ENCODE measurements at regions of chr7 and their contacts with region 1.

Region 1: DNA sequence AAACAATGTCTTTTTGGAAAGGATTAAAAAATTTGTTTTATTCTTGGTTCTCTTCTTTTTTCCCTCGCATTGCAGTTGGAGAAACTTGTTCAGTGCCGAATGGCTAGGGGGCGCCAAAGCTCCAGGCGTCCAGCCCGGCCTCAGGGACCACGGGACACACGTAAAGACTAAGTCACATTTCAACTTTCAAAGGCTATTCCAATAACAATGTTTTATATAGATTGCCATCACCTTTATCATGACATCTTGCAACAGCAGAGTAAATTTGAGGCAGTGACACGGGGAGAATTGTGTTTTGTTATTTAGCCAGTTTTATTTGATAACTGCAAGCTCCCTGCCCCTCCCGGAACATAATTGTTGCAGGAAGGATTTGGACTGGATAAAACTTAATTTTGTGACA is 2.2 kb upstream of the IGFBP3 start:
- DNase-seq: peak; percentile 75 to 79
- ATAC-seq: peak in 7 of 8 donors; percentile 47 to 74 (median 66)
- H3K4me3 ChIP-seq: peak overlapping the region in 9 of 10 donors; percentile 34 to 77 (median 63)
- H3K27ac ChIP-seq: peak overlapping the region in 5 of 10 donors; percentile 7 to 73 (median 70)
- H3K4me1 ChIP-seq: peaks cover 5 to 53% (median 45%) of the 10 kb centered on the region in 9 donors
- H3K27me3 ChIP-seq: peaks cover 0 to 57% (median 0%) of the 10 kb centered on the region in 7 donors
- CTCF ChIP-seq: peak; percentile 88 to 98 (median 93)

Region 2: GRCh38 chr7:46215987-46216567 is 292.8 kb after region 1 on chr7:
- intact Hi-C with region 1: loop called in 1 of 10 experiments (anchors 10 kb)
- DNase-seq: peak; percentile 27 to 68
- ATAC-seq: peak; percentile 76 to 91 (median 84)
- H3K4me3 ChIP-seq: no peak overlapping the region
- H3K27ac ChIP-seq: peak overlapping the region in 6 of 10 donors; percentile 54 to 84 (median 66)
- H3K4me1 ChIP-seq: peaks cover 2 to 42% (median 13%) of the 10 kb centered on the region in 9 donors
- H3K27me3 ChIP-seq: no peaks in the 10 kb centered on the region
- CTCF ChIP-seq: no peak

Region 3: DNA sequence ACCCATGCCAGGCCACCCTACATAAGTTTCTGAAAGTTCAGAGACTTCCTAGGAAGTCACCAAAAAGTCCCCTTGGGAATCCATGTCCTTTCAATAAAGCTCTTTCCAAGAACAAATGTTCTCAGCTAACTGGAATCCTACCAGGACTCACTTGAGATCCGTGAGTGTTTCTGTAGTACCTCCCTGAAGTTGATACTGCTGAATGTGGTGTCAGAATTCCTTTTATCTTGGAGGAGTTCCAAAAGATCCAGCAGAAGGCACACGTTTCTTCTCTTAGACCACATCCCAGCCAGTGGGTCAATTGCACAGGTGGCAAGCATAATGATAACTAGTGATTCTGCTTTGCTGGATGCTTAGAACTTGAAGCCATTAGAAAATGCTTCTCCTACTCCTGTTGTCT is 687.5 kb after region 1 on chr7:
- intact Hi-C with region 1: loop called in 1 of 10 experiments (anchors 5 kb)
- DNase-seq: no peak
- ATAC-seq: peak in 5 of 8 donors; percentile 17 to 75 (median 47)
- H3K4me3 ChIP-seq: no peak overlapping the region
- H3K27ac ChIP-seq: no peak overlapping the region
- H3K4me1 ChIP-seq: peaks cover 3 to 33% (median 10%) of the 10 kb centered on the region in 9 donors
- H3K27me3 ChIP-seq: no peaks in the 10 kb centered on the region
- CTCF ChIP-seq: no peak

Region 4: GRCh38 chr7:46776790-46777189 is 853.5 kb after region 1 on chr7:
- intact Hi-C with region 1: loop called in 1 of 10 experiments (anchors 10 kb)
- DNase-seq: no peak
- ATAC-seq: no peak
- H3K4me3 ChIP-seq: no peak overlapping the region
- H3K27ac ChIP-seq: no peak overlapping the region
- H3K4me1 ChIP-seq: peaks cover 0 to 35% (median 18%) of the 10 kb centered on the region in 9 donors
- H3K27me3 ChIP-seq: no peaks in the 10 kb centered on the region
- CTCF ChIP-seq: peak; percentile 8 to 68 (median 47)

Region 5: DNA sequence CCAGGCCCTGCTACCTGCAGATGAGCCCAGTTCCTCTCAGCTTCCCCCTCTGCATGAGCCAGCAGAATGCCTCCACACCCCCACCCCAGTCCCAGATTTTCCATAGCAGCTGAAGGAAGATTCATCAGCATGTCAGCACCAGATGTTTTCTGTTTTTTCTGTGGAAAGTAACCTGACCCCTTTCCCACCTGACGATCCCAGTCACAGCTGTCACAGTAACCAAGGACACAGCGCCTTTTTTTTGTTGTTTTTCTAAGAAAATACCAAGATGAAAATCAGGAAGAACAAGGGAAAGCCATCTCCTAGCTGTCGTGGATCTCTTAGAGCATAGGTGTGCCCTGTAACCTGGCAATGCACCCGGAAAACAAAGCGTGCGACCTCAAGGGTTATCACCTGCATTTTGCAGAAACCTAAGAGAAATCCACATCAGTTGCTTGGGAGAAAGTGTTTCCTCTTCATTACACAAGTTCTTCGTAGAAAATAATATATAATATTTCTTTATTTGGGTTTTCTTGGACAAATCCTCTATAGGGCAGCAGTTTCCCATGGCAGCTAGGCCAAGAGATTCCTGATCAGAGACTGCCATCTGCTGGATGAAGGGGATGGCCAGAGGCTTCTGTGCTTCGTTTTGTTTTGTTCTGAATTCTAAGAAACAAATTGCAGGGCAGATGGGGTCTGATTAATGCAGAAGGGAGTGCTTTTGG is 1256.7 kb after region 1 on chr7:
- intact Hi-C with region 1: loop called in 8 of 10 experiments (anchors 1 to 10 kb)
- DNase-seq: peak in 1 of 2 donors; percentile 56
- ATAC-seq: peak; percentile 44 to 74 (median 61)
- H3K4me3 ChIP-seq: no peak overlapping the region
- H3K27ac ChIP-seq: no peak overlapping the region
- H3K4me1 ChIP-seq: peaks cover 7 to 51% (median 29%) of the 10 kb centered on the region in 9 donors
- H3K27me3 ChIP-seq: no peaks in the 10 kb centered on the region
- CTCF ChIP-seq: peak; percentile 55 to 91 (median 82)

Region 6: GRCh38 chr7:47254081-47255006 is 1331.1 kb after region 1 on chr7:
- intact Hi-C with region 1: loop called in 7 of 10 experiments (anchors 2 to 10 kb)
- DNase-seq: peak; percentile 73 to 88
- ATAC-seq: peak; percentile 91 to 96 (median 92)
- H3K4me3 ChIP-seq: peak overlapping the region; percentile 32 to 80 (median 67)
- H3K27ac ChIP-seq: peak overlapping the region; percentile 81 to 96 (median 89)
- H3K4me1 ChIP-seq: peaks cover 2 to 17% (median 15%) of the 10 kb centered on the region in 9 donors
- H3K27me3 ChIP-seq: no peaks in the 10 kb centered on the region
- CTCF ChIP-seq: peak; percentile 88 to 100 (median 95)

Measured in heart right ventricle (tissue), 16 donors.